Right ventricle myocardium superior (tissue), 1 donor: ENCODE measurements at regions of chr1 and their contacts with region 1.

Region 1: GRCh38 chr1:155978325-155978972 is at the start of gene ARHGEF2:
- DNase-seq: peak; percentile 92
- ATAC-seq: peak; percentile 76
- total RNA-seq, gene ARHGEF2: 55.7 TPM

Region 2: GRCh38 chr1:156499842-156500546 is 521.5 kb after region 1 on chr1:
- intact Hi-C with region 1: loop called (anchors 10 kb)
- DNase-seq: peak; percentile 73
- ATAC-seq: peak; percentile 8